Activated CD4-positive, alpha-beta T cell treated with anti-CD3 and anti-CD28 coated beads, Interleukin-2, amount 10 ng/mL, durations not matched to agents 24 days and 14 days (primary cell): ENCODE measurements at regions of chr9 and their contacts with region 1.

Region 1: GRCh38 chr9:89448381-89448780 is 49.5 kb downstream of the SEMA4D start:
- DNase-seq: no peak
- H3K4me3 Mint-ChIP-seq: peak overlapping the region; percentile 71
- H3K27ac Mint-ChIP-seq: peak overlapping the region; percentile 93
- H3K4me1 Mint-ChIP-seq: peaks cover 83% of the 10 kb centered on the region
- H3K27me3 Mint-ChIP-seq: no peaks in the 10 kb centered on the region

Region 2: GRCh38 chr9:89375191-89375760 is 73.1 kb before region 1 on chr9:
- intact Hi-C with region 1: no loop called
- DNase-seq: peak; percentile 81
- H3K4me3 Mint-ChIP-seq: peak overlapping the region; percentile 42
- H3K27ac Mint-ChIP-seq: peak overlapping the region; percentile 87
- H3K4me1 Mint-ChIP-seq: peaks cover 39% of the 10 kb centered on the region
- H3K27me3 Mint-ChIP-seq: no peaks in the 10 kb centered on the region

Region 3: GRCh38 chr9:89437000-89437631 is 11.3 kb before region 1 on chr9:
- intact Hi-C with region 1: loop called (anchors 2 kb)
- DNase-seq: no peak
- H3K4me3 Mint-ChIP-seq: peak overlapping the region; percentile 31
- H3K27ac Mint-ChIP-seq: peak overlapping the region; percentile 70
- H3K4me1 Mint-ChIP-seq: peaks cover 60% of the 10 kb centered on the region
- H3K27me3 Mint-ChIP-seq: no peaks in the 10 kb centered on the region

Region 4: DNA sequence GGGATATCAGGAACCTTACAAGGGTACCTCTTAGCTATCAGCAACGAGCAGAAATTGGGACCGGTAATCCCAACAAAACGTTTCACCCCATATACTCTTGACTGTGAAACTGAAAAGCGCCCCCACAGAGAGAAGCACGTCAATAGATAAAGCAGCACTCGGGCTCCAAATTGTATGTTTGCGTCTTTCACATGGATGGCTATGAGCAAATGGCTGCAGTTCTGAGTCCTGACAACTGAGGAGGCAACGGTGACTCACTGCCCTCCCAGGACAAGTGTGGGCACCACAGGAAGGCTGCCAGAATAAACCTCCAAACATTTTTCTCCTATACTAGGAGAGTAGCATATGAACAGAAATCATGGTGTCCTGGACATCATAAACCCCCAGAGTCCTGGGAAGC is 12.9 kb after region 1 on chr9:
- intact Hi-C with region 1: loop called (anchors 2 kb)
- DNase-seq: peak; percentile 70
- H3K4me3 Mint-ChIP-seq: peak overlapping the region; percentile 59
- H3K27ac Mint-ChIP-seq: peak overlapping the region; percentile 91
- H3K4me1 Mint-ChIP-seq: peaks cover 96% of the 10 kb centered on the region
- H3K27me3 Mint-ChIP-seq: no peaks in the 10 kb centered on the region